Gastrocnemius medialis (tissue), 4 donors: ENCODE measurements at regions of chr6 and their contacts with region 1.

Region 1: DNA sequence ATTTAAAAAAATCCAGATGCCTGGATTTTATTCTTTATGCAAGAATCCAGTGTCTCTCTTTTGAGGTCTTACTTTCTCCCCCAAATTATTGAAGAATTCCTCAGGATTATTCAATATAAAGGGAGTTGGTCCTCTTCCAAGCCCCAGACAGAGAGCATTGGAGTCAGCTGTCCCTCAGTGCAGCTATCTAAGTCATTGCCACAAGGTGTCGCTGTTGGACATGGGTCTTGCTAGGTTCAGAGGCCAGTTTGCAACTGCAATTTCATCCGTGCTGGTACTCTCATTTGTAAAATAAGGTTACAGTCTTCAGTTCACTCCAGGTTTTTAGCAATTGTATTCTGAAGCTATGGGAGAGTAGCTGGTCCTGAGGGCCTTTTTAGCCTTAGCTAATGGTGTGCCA is 27.8 kb downstream of the CCN2 start:
- DNase-seq: no peak
- ATAC-seq: no peak
- H3K4me3 ChIP-seq: no peak overlapping the region
- H3K27ac ChIP-seq: no peak overlapping the region
- H3K4me1 ChIP-seq: no peaks in the 10 kb centered on the region
- H3K27me3 ChIP-seq: no peaks in the 10 kb centered on the region
- CTCF ChIP-seq: peak in 3 of 5 experiments; percentile 19 to 42 (median 33)
- POLR2A ChIP-seq: no peak

Region 2: DNA sequence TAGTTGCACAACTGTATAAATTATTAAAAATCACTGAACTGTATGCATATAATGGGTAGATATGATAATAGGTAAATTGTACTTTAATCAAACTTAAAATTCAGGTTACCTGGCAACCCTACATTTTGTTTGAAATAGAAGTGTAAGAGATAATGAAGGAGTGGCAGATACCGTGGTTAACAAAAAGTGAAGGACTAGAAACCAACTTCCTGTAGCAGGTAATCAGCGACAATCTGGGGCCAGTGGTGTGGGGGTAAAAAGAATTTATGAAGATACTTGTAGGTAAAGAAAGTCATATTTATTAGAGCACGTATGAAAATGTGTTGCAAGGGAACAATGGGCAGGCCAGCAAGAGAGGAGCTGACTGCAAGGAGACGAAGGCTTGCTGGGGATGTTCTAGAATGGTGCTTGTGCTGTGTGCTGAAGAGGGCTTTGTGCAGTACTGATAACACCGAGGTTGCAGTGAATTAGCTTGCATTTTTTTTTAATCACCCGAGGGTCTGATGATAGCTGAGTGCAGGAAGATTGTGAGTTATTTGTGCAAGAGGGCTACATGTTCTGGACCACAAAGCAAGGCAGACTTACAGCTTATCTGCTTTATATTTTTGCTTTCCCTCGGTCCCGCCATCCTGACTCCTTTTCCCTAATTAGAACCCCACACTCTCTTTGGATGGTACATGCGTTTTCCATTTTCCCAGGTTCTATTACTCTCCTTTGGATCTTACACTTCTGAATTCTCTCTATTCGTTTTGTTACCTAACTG is 120.2 kb before region 1 on chr6:
- in situ Hi-C with region 1: no loop called
- intact Hi-C with region 1: no loop called
- DNase-seq: no peak
- ATAC-seq: no peak
- H3K4me3 ChIP-seq: no peak overlapping the region
- H3K27ac ChIP-seq: no peak overlapping the region
- H3K4me1 ChIP-seq: no peaks in the 10 kb centered on the region
- H3K27me3 ChIP-seq: no peaks in the 10 kb centered on the region
- CTCF ChIP-seq: no peak
- POLR2A ChIP-seq: no peak

Region 3: DNA sequence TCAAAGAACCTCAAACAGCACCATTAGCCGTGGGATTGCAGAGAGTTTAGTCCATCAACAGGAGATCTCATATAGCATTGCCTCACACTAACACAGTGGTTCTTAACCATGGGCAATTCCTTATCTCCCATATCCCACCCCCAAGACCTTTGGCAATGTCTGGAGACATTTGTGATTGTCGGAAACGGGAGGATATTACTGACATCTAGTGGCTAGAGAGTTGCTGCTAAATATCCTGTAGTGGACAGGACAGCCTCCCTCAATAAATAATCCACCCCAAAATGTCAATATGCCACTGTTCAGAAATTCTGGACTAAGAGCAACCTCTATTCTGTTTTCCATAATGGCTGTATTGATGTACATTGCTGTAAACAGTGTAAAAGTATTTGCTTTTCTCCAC is 237.9 kb after region 1 on chr6:
- in situ Hi-C with region 1: no loop called
- intact Hi-C with region 1: loop called (anchors 10 kb)
- DNase-seq: no peak
- ATAC-seq: no peak
- H3K4me3 ChIP-seq: no peak overlapping the region
- H3K27ac ChIP-seq: no peak overlapping the region
- H3K4me1 ChIP-seq: no peaks in the 10 kb centered on the region
- H3K27me3 ChIP-seq: no peaks in the 10 kb centered on the region
- CTCF ChIP-seq: peak in 3 of 5 experiments; percentile 6 to 34 (median 19)
- POLR2A ChIP-seq: no peak